ENCODE measurements at regions of chr6 and their contacts with region 1.

Region 1: GRCh38 chr6:104789770-104790190 is 69.9 kb downstream of the HACE1 start:
- DNase-seq: no peak
- ATAC-seq: peak; percentile 86
- H3K4me3 Mint-ChIP-seq: peak overlapping the region; percentile 66
- H3K27ac Mint-ChIP-seq: peak overlapping the region; percentile 96
- H3K4me1 Mint-ChIP-seq: peaks cover 30% of the 10 kb centered on the region
- H3K27me3 Mint-ChIP-seq: no peaks in the 10 kb centered on the region

Region 2: DNA sequence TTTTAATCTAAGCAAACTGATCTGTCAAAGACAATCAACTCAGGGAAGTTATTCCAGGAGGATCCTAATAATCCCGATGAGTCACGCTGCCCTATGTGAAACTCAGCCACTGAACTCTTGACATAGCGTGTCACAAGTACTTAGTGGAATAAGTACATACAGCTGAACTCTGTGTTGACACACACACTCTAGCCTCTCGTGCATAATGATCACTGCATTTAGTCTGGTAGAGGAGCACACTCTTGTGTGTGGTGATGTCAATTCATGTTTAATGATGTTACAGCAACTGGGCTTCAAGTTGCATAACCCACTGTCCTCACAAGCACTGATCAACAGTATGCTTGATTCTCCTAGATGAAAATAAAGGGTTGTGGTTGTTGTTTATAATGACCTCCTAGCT is 78.4 kb before region 1 on chr6:
- CTCF ChIA-PET with region 1: no interaction called
- DNase-seq: no peak
- ATAC-seq: no peak
- H3K4me3 Mint-ChIP-seq: no peak overlapping the region
- H3K27ac Mint-ChIP-seq: no peak overlapping the region
- H3K4me1 Mint-ChIP-seq: no peaks in the 10 kb centered on the region
- H3K27me3 Mint-ChIP-seq: no peaks in the 10 kb centered on the region

Region 3: GRCh38 chr6:104736545-104736944 is 53.2 kb before region 1 on chr6:
- CTCF ChIA-PET with region 1: no interaction called
- DNase-seq: no peak
- ATAC-seq: no peak
- H3K4me3 Mint-ChIP-seq: no peak overlapping the region
- H3K27ac Mint-ChIP-seq: no peak overlapping the region
- H3K4me1 Mint-ChIP-seq: no peaks in the 10 kb centered on the region
- H3K27me3 Mint-ChIP-seq: no peaks in the 10 kb centered on the region

Region 4: GRCh38 chr6:104859225-104860146 is 69.7 kb after region 1 on chr6 and contains the start of gene HACE1:
- CTCF ChIA-PET with region 1: interaction called, 11 read pairs
- DNase-seq: peak; percentile 93
- ATAC-seq: peak; percentile 99
- H3K4me3 Mint-ChIP-seq: peak within 1 kb of the TSS; percentile 90
- H3K27ac Mint-ChIP-seq: peak within 1 kb of the TSS; percentile 82
- H3K4me1 Mint-ChIP-seq: peaks cover 20% of the 10 kb centered on the region
- H3K27me3 Mint-ChIP-seq: no peaks in the 10 kb centered on the region
- total RNA-seq, gene HACE1: 15.6 to 22.0 TPM

Region 5: GRCh38 chr6:105077596-105078385 is 288.0 kb after region 1 on chr6:
- CTCF ChIA-PET with region 1: interaction called, 14 read pairs
- DNase-seq: no peak
- ATAC-seq: no peak
- H3K4me3 Mint-ChIP-seq: no peak overlapping the region
- H3K27ac Mint-ChIP-seq: no peak overlapping the region
- H3K4me1 Mint-ChIP-seq: no peaks in the 10 kb centered on the region
- H3K27me3 Mint-ChIP-seq: peaks cover 31% of the 10 kb centered on the region